Endothelial cell of umbilical vein (primary cell): ENCODE measurements at regions of chr11 and their contacts with region 1.

Region 1: GRCh38 chr11:122863704-122864326 is 18.7 kb upstream of the JHY start:
- DNase-seq: peak; percentile 56
- H3K4me3 ChIP-seq: no peak overlapping the region
- H3K27ac ChIP-seq: no peak overlapping the region
- H3K4me1 ChIP-seq: no peaks in the 10 kb centered on the region
- H3K27me3 ChIP-seq: peaks cover 11 to 18% of the 10 kb centered on the region in 2 experiments
- CTCF ChIP-seq: peak; percentile 66 to 76
- POLR2A ChIP-seq: no peak

Region 2: GRCh38 chr11:122317305-122317704 is 546.5 kb before region 1 on chr11:
- CTCF ChIA-PET with region 1: no interaction called
- POLR2A ChIA-PET with region 1: no interaction called
- dilution Hi-C with region 1: no loop called
- intact Hi-C with region 1: no loop called
- DNase-seq: no peak
- H3K4me3 ChIP-seq: no peak overlapping the region
- H3K27ac ChIP-seq: no peak overlapping the region
- H3K4me1 ChIP-seq: no peaks in the 10 kb centered on the region
- H3K27me3 ChIP-seq: peaks cover 0 to 1% of the 10 kb centered on the region in 2 experiments
- CTCF ChIP-seq: no peak
- POLR2A ChIP-seq: no peak

Region 3: GRCh38 chr11:122517403-122518379 is 346.1 kb before region 1 on chr11:
- CTCF ChIA-PET with region 1: no interaction called
- POLR2A ChIA-PET with region 1: no interaction called
- dilution Hi-C with region 1: no loop called
- intact Hi-C with region 1: no loop called
- DNase-seq: no peak
- H3K4me3 ChIP-seq: no peak overlapping the region
- H3K27ac ChIP-seq: no peak overlapping the region
- H3K4me1 ChIP-seq: no peaks in the 10 kb centered on the region
- H3K27me3 ChIP-seq: no peaks in the 10 kb centered on the region
- CTCF ChIP-seq: no peak
- POLR2A ChIP-seq: no peak

Region 4: GRCh38 chr11:122578168-122578825 is 285.5 kb before region 1 on chr11:
- CTCF ChIA-PET with region 1: interaction called, 18 read pairs
- POLR2A ChIA-PET with region 1: no interaction called
- dilution Hi-C with region 1: no loop called
- intact Hi-C with region 1: no loop called
- DNase-seq: no peak
- H3K4me3 ChIP-seq: no peak overlapping the region
- H3K27ac ChIP-seq: no peak overlapping the region
- H3K4me1 ChIP-seq: no peaks in the 10 kb centered on the region
- H3K27me3 ChIP-seq: no peaks in the 10 kb centered on the region
- CTCF ChIP-seq: no peak
- POLR2A ChIP-seq: no peak

Region 5: GRCh38 chr11:122874991-122875390 is 11.2 kb after region 1 on chr11:
- CTCF ChIA-PET with region 1: interaction called, 39 read pairs
- POLR2A ChIA-PET with region 1: no interaction called
- dilution Hi-C with region 1: no loop called
- intact Hi-C with region 1: no loop called
- DNase-seq: no peak
- H3K4me3 ChIP-seq: no peak overlapping the region
- H3K27ac ChIP-seq: no peak overlapping the region
- H3K4me1 ChIP-seq: no peaks in the 10 kb centered on the region
- H3K27me3 ChIP-seq: peaks cover 2 to 4% of the 10 kb centered on the region in 2 experiments
- CTCF ChIP-seq: no peak
- POLR2A ChIP-seq: no peak

Region 6: GRCh38 chr11:122897606-122898485 is 34.0 kb after region 1 on chr11:
- CTCF ChIA-PET with region 1: interaction called, 16 read pairs
- POLR2A ChIA-PET with region 1: no interaction called
- dilution Hi-C with region 1: no loop called
- intact Hi-C with region 1: no loop called
- DNase-seq: peak; percentile 55
- H3K4me3 ChIP-seq: no peak overlapping the region
- H3K27ac ChIP-seq: peak overlapping the region; percentile 70
- H3K4me1 ChIP-seq: peaks cover 27% of the 10 kb centered on the region
- H3K27me3 ChIP-seq: no peaks in the 10 kb centered on the region
- CTCF ChIP-seq: no peak
- POLR2A ChIP-seq: no peak

Region 7: DNA sequence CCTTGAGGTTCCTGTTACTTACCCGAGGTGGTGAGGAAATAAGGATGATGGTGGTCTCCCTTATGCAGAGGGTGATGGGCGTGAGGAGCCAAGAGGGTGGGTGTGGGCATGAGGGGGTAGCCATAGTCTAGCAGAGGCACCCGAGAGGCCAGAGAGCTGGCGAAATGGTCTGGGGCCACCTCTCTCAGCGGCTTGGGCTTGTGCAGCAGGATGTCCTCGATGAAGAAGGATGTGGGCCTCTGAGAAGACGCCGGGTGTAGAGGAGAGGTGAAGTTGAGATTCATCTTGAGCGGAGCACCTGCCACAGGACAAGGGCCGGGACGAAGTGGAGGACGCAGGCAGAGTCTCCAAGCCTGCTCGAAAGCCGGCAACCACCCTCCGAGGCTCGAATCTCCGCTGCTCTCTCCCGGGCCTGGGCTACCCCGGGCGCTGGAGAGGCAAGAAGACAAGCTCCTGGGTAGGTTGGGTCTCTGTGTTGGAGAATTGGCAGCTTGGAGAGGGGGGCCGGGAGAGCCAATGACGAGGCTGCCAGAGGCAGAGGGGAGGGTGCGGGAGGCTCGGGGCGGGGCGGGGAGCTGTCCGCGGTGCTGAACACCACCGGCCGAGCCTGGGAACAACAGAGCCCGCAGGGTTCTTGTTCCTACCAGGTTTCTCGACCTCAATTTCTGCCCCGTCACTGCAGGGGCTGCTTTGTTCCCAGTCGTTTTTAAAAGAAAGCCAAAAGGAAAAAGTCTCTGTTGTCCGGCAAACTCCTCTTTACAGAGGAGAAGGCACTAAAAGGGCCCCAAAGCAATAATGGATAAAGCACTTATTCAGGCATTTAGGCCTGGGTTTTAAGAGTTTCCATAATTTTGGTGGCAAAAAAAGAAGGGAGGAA is 117.8 kb after region 1 on chr11 and contains the start of gene BSX:
- CTCF ChIA-PET with region 1: interaction called, 13 read pairs
- POLR2A ChIA-PET with region 1: no interaction called
- dilution Hi-C with region 1: no loop called
- intact Hi-C with region 1: no loop called
- DNase-seq: peak; percentile 38
- H3K4me3 ChIP-seq: no peak within 1 kb of the TSS
- H3K27ac ChIP-seq: no peak within 1 kb of the TSS
- H3K4me1 ChIP-seq: no peaks in the 10 kb centered on the region
- H3K27me3 ChIP-seq: peaks cover 77 to 96% of the 10 kb centered on the region in 2 experiments
- CTCF ChIP-seq: no peak
- POLR2A ChIP-seq: no peak
- total RNA-seq, gene BSX: not detected in 2 replicates

Region 8: DNA sequence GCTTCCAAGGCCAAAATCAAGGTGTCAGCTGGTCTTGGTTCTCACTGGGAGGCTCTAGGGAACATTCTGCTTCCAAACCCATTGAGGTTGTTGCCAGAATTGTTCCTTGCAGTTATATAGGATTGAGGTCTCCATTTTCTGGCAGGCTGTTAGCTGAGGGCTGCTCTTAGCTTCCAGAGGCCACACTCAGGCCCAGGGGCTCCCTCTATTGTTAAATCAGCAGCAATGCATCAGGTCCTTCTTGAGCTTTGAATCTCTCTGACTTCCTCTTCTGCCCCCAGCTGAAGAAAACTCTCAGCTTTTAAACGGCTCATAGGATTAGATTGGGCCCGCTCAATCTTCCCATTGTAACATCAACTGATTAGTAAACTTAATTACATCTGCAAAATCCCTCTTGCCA is 157.2 kb after region 1 on chr11:
- CTCF ChIA-PET with region 1: interaction called, 621 read pairs
- POLR2A ChIA-PET with region 1: no interaction called
- dilution Hi-C with region 1: loop called (anchors 10 kb)
- intact Hi-C with region 1: loop called (anchors 1 kb)
- DNase-seq: peak; percentile 32
- H3K4me3 ChIP-seq: no peak overlapping the region
- H3K27ac ChIP-seq: no peak overlapping the region
- H3K4me1 ChIP-seq: no peaks in the 10 kb centered on the region
- H3K27me3 ChIP-seq: peaks cover 3 to 16% of the 10 kb centered on the region in 2 experiments
- CTCF ChIP-seq: peak; percentile 57 to 76
- POLR2A ChIP-seq: no peak

Region 9: DNA sequence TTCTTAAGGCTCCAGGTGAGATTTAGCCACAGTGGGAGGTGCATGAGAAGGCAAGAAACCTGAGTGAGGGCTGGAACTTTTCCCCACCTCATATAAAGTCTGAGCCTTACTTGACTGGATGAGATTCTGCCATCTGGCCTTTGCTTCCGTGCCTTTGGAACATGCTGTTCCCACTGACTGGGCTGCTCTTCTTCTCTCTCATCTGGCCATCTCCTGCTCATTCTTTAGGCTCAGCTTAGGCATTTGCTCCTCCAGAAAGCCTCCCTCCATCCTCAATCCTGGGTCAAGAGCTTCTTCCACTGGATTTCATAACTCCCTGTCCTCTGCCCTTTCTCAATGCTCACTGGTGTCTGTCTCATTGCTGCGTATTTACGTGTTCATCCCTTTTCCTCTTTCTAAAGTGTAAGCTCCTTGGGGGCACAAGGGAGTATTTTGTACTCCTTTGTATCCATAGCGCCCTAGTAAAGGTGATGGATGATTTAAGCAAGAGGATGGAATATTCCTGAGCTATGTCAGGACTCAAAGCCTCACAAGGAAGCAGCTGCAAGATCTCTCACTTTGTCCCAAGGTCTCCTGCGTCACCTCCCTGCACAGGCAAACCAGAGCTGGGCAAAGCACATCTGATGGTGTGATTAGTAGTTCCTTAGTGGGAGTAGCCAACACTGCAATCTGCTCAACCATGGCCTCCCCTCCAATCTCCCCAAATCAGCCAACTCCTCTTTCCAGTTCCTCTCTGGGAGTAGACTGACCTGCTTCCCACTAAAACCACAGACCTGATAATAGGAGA is 182.9 kb after region 1 on chr11:
- CTCF ChIA-PET with region 1: interaction called, 11 read pairs
- POLR2A ChIA-PET with region 1: no interaction called
- dilution Hi-C with region 1: no loop called
- intact Hi-C with region 1: no loop called
- DNase-seq: no peak
- H3K4me3 ChIP-seq: no peak overlapping the region
- H3K27ac ChIP-seq: no peak overlapping the region
- H3K4me1 ChIP-seq: no peaks in the 10 kb centered on the region
- H3K27me3 ChIP-seq: peaks cover 0 to 4% of the 10 kb centered on the region in 2 experiments
- CTCF ChIP-seq: no peak
- POLR2A ChIP-seq: no peak